CD4-positive, alpha-beta memory T cell (primary cell): ENCODE measurements at regions of chr1 and their contacts with region 1.

Region 1: GRCh38 chr1:179293340-179294327 is at the start of gene SOAT1:
- DNase-seq: peak; percentile 89 to 92 (median 90)
- H3K4me3 ChIP-seq: peak within 1 kb of the TSS; percentile 82 to 93
- H3K4me3 Mint-ChIP-seq: peak within 1 kb of the TSS; percentile 91 to 99 (median 96)
- H3K27ac ChIP-seq: peak within 1 kb of the TSS; percentile 86
- H3K27ac Mint-ChIP-seq: peak within 1 kb of the TSS; percentile 81 to 98 (median 95)
- H3K4me1 ChIP-seq: peaks cover 46% of the 10 kb centered on the region
- H3K4me1 Mint-ChIP-seq: peaks cover 25 to 47% (median 31%) of the 10 kb centered on the region in 4 donors
- H3K27me3 ChIP-seq: no peaks in the 10 kb centered on the region
- H3K27me3 Mint-ChIP-seq: no peaks in the 10 kb centered on the region
- total RNA-seq, gene SOAT1: 51.2 to 51.6 TPM

Region 2: DNA sequence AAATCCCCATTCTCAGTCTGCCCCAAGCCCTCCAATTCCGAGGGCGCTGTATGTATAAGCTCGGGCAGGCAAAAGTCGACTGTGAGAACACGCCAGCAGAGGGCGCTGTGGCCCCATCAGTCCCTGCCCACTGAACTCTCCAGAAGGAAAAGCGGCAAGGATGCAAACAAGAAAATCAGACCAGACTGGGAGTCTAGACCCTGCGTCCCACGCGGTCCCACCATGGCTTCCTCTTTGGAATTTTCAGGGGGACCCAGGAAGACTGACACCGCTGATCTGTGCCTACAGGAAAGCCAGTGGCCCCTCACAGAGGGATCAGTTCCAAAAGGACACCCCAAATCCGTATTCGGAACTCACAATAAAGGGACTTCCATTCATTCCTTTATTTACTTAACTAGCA is 761.2 kb before region 1 on chr1:
- CTCF ChIA-PET with region 1: no interaction called
- POLR2A ChIA-PET with region 1: no interaction called
- intact Hi-C with region 1: no loop called
- DNase-seq: peak; percentile 56 to 64 (median 60)
- H3K4me3 ChIP-seq: no peak overlapping the region
- H3K4me3 Mint-ChIP-seq: peak overlapping the region in 1 of 8 donors; percentile 16
- H3K27ac ChIP-seq: no peak overlapping the region
- H3K27ac Mint-ChIP-seq: peak overlapping the region in 3 of 7 donors; percentile 18 to 53 (median 43)
- H3K4me1 ChIP-seq: peaks cover 6% of the 10 kb centered on the region
- H3K4me1 Mint-ChIP-seq: peaks cover 0 to 6% (median 3%) of the 10 kb centered on the region in 4 donors
- H3K27me3 ChIP-seq: no peaks in the 10 kb centered on the region
- H3K27me3 Mint-ChIP-seq: peaks cover 0 to 1% of the 10 kb centered on the region in 2 donors

Region 3: GRCh38 chr1:179229214-179230140 is 64.2 kb before region 1 on chr1 and contains the start of gene ABL2:
- CTCF ChIA-PET with region 1: no interaction called
- POLR2A ChIA-PET with region 1: interaction called, 11 read pairs
- intact Hi-C with region 1: loop called (anchors 1 kb)
- DNase-seq: peak; percentile 37 to 58 (median 50)
- H3K4me3 ChIP-seq: peak within 1 kb of the TSS; percentile 14 to 73
- H3K4me3 Mint-ChIP-seq: peak within 1 kb of the TSS; percentile 92 to 98 (median 93)
- H3K27ac ChIP-seq: peak within 1 kb of the TSS; percentile 59
- H3K27ac Mint-ChIP-seq: peak within 1 kb of the TSS; percentile 91 to 95 (median 92)
- H3K4me1 ChIP-seq: peaks cover 23% of the 10 kb centered on the region
- H3K4me1 Mint-ChIP-seq: peaks cover 22 to 37% (median 29%) of the 10 kb centered on the region in 4 donors
- H3K27me3 ChIP-seq: no peaks in the 10 kb centered on the region
- H3K27me3 Mint-ChIP-seq: no peaks in the 10 kb centered on the region
- total RNA-seq, gene ABL2: 16.9 to 18.6 TPM